ENCODE measurements at regions of chr18 and their contacts with region 1.

Region 1: DNA sequence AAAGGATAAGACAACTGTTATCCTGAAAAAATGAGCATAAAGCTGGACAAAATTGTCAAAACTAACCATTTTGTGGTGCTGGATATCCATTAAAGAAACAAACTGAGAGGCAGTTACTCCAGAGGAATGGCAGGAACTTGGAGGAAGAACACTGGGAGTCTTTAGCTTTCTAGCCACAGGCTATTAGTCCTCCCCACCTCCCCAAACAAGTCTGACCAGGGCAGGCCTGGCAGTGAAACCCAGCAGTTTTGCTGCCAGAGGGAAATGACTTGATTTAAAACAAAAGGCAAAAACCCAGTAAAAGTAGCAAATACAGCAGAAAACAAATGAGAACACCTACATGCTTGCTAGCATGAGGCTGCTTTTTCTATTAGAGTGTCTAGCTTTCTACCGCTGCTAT is 34.9 kb downstream of the OSBPL1A start:
- DNase-seq: no peak
- H3K4me3 ChIP-seq: no peak overlapping the region
- H3K27ac ChIP-seq: no peak overlapping the region
- H3K4me1 ChIP-seq: no peaks in the 10 kb centered on the region
- H3K27me3 ChIP-seq: no peaks in the 10 kb centered on the region
- CTCF ChIP-seq: no peak
- POLR2A ChIP-seq: no peak

Region 2: GRCh38 chr18:24346254-24346653 is 16.5 kb before region 1 on chr18:
- CTCF ChIA-PET with region 1: interaction called, 24 read pairs
- POLR2A ChIA-PET with region 1: no interaction called
- dilution Hi-C with region 1: no loop called
- intact Hi-C with region 1: no loop called
- DNase-seq: no peak
- H3K4me3 ChIP-seq: no peak overlapping the region
- H3K27ac ChIP-seq: no peak overlapping the region
- H3K4me1 ChIP-seq: no peaks in the 10 kb centered on the region
- H3K27me3 ChIP-seq: no peaks in the 10 kb centered on the region
- CTCF ChIP-seq: no peak
- POLR2A ChIP-seq: no peak

Region 3: GRCh38 chr18:24413148-24413547 is 50.4 kb after region 1 on chr18:
- CTCF ChIA-PET with region 1: interaction called, 40 read pairs
- POLR2A ChIA-PET with region 1: no interaction called
- dilution Hi-C with region 1: no loop called
- intact Hi-C with region 1: no loop called
- DNase-seq: no peak
- H3K4me3 ChIP-seq: no peak overlapping the region
- H3K27ac ChIP-seq: no peak overlapping the region
- H3K4me1 ChIP-seq: no peaks in the 10 kb centered on the region
- H3K27me3 ChIP-seq: peaks cover 18 to 22% of the 10 kb centered on the region in 2 experiments
- CTCF ChIP-seq: no peak
- POLR2A ChIP-seq: no peak

Region 4: GRCh38 chr18:24432618-24433017 is 69.9 kb after region 1 on chr18:
- CTCF ChIA-PET with region 1: interaction called, 32 read pairs
- POLR2A ChIA-PET with region 1: no interaction called
- dilution Hi-C with region 1: no loop called
- intact Hi-C with region 1: loop called (anchors 5 kb)
- DNase-seq: no peak
- H3K4me3 ChIP-seq: no peak overlapping the region
- H3K27ac ChIP-seq: no peak overlapping the region
- H3K4me1 ChIP-seq: peaks cover 3% of the 10 kb centered on the region
- H3K27me3 ChIP-seq: no peaks in the 10 kb centered on the region
- CTCF ChIP-seq: no peak
- POLR2A ChIP-seq: no peak

Region 5: DNA sequence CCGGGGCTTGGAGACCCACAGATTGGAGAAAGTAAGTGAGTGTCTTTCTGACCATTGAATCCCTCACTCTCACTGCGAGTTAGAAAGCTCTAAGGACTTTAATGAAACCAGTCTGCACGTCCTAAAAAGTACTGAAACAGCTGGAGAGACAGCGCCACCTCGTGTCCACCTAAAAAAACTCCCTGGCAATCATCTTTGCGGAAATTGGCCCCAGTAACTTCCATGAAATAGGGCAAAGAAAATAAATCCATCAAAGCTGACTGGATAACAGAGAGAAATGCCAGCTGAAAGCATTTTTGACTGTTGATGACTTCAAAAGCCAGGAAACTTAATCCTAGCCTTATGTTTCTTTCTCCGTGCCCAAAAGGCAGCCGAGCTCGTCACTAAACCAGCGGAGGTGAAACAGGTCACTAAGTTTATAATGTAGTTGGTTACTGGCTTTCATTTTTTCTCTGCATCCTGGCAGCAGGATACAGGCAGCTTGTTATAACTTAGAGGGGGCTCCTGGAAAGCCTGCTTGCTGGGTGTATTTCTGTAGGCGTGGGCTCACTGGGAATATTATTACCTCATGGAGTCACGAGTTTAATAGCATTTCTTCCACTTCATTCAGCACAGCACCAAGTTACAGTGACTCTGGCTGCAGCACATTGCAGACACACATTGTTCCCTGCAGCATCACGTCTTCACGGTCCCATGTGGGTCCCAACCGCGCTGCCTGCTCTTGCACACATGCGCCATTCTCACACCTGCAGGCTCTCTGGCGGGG is 364.2 kb after region 1 on chr18:
- CTCF ChIA-PET with region 1: interaction called, 8 read pairs
- POLR2A ChIA-PET with region 1: no interaction called
- dilution Hi-C with region 1: no loop called
- intact Hi-C with region 1: loop called (anchors 5 kb)
- DNase-seq: peak; percentile 77
- H3K4me3 ChIP-seq: peak overlapping the region in 1 of 3 experiments; percentile 10
- H3K27ac ChIP-seq: no peak overlapping the region
- H3K4me1 ChIP-seq: no peaks in the 10 kb centered on the region
- H3K27me3 ChIP-seq: peaks cover 18 to 21% of the 10 kb centered on the region in 2 experiments
- CTCF ChIP-seq: peak; percentile 77 to 87
- POLR2A ChIP-seq: no peak

Measured in endothelial cell of umbilical vein (primary cell).